ENCODE measurements at regions of chr20 and their contacts with region 1.

Region 1: GRCh38 chr20:31661625-31662371 is 24.1 kb downstream of the COX4I2 start:
- DNase-seq: peak; percentile 70 to 81 (median 73)
- H3K4me3 ChIP-seq: peak overlapping the region in 1 of 2 donors; percentile 70
- H3K4me3 Mint-ChIP-seq: peak overlapping the region; percentile 83 to 93 (median 84)
- H3K27ac ChIP-seq: peak overlapping the region; percentile 59
- H3K27ac Mint-ChIP-seq: peak overlapping the region; percentile 57 to 95 (median 89)
- H3K4me1 ChIP-seq: peaks cover 31% of the 10 kb centered on the region
- H3K4me1 Mint-ChIP-seq: peaks cover 21 to 43% (median 29%) of the 10 kb centered on the region in 4 donors
- H3K27me3 ChIP-seq: no peaks in the 10 kb centered on the region
- H3K27me3 Mint-ChIP-seq: no peaks in the 10 kb centered on the region

Region 2: GRCh38 chr20:31278178-31278577 is 383.6 kb before region 1 on chr20:
- CTCF ChIA-PET with region 1: no interaction called
- POLR2A ChIA-PET with region 1: no interaction called
- intact Hi-C with region 1: no loop called
- DNase-seq: no peak
- H3K4me3 ChIP-seq: no peak overlapping the region
- H3K4me3 Mint-ChIP-seq: peak overlapping the region in 1 of 8 donors; percentile 17
- H3K27ac ChIP-seq: no peak overlapping the region
- H3K27ac Mint-ChIP-seq: no peak overlapping the region
- H3K4me1 ChIP-seq: no peaks in the 10 kb centered on the region
- H3K4me1 Mint-ChIP-seq: no peaks in the 10 kb centered on the region
- H3K27me3 ChIP-seq: no peaks in the 10 kb centered on the region
- H3K27me3 Mint-ChIP-seq: no peaks in the 10 kb centered on the region

Region 3: DNA sequence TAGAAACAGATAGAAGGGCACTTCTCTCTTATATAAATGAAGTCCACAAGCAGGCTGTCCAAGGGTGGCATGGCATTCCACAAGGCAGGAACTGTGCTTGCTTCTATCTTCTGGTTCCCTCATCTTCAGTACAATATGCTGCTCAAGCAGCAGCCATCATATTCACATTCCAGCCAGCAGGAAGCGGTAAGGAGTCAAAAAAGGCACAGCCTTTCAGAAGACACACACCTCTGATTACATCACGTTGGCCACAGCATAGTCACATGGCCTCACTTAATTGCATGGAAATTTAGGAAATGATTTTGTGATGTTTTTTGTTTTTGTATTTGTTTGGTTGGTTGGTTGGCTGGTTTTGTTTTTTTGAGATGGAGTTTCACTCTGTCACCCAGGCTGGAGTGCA is 167.7 kb before region 1 on chr20:
- CTCF ChIA-PET with region 1: no interaction called
- POLR2A ChIA-PET with region 1: no interaction called
- intact Hi-C with region 1: no loop called
- DNase-seq: no peak
- H3K4me3 ChIP-seq: no peak overlapping the region
- H3K4me3 Mint-ChIP-seq: no peak overlapping the region
- H3K27ac ChIP-seq: no peak overlapping the region
- H3K27ac Mint-ChIP-seq: no peak overlapping the region
- H3K4me1 ChIP-seq: no peaks in the 10 kb centered on the region
- H3K4me1 Mint-ChIP-seq: no peaks in the 10 kb centered on the region
- H3K27me3 ChIP-seq: peaks cover 4% of the 10 kb centered on the region
- H3K27me3 Mint-ChIP-seq: peaks cover 10 to 13% of the 10 kb centered on the region in 2 donors

Region 4: DNA sequence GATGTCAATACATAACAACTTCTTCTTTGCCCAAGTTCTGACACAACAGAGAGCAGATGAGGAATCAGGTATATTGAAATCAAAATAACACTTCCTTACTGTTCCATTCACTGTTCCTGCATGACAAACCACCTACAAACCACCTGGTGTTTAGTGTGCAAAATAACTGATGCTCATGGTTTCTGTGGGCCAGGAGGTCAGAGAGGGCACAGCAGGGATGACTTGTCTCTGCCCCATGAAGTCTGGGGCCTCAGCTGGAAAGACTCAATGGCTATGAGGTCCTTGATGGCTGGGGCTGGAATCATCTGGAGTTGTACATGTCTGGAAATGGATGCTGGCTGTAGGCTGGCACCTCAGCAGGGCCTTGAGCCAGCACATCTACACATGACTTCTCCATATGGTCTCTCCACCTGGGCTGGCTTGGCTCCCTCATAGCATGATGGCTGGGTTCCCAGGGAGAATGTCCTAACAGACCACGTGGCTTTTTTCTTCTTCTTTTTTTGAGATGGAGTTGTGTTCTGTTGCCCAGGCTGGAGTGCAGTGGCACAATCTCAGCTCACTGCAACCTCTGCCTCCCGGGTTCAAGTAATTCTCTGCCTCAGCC is 31.5 kb before region 1 on chr20:
- CTCF ChIA-PET with region 1: interaction called, 27 read pairs
- POLR2A ChIA-PET with region 1: no interaction called
- intact Hi-C with region 1: no loop called
- DNase-seq: no peak
- H3K4me3 ChIP-seq: no peak overlapping the region
- H3K4me3 Mint-ChIP-seq: no peak overlapping the region
- H3K27ac ChIP-seq: no peak overlapping the region
- H3K27ac Mint-ChIP-seq: no peak overlapping the region
- H3K4me1 ChIP-seq: no peaks in the 10 kb centered on the region
- H3K4me1 Mint-ChIP-seq: no peaks in the 10 kb centered on the region
- H3K27me3 ChIP-seq: no peaks in the 10 kb centered on the region
- H3K27me3 Mint-ChIP-seq: no peaks in the 10 kb centered on the region

Region 5: GRCh38 chr20:31684153-31685015 is 22.6 kb after region 1 on chr20:
- CTCF ChIA-PET with region 1: interaction called, 24 read pairs
- POLR2A ChIA-PET with region 1: interaction called, 5 read pairs
- intact Hi-C with region 1: no loop called
- DNase-seq: peak; percentile 32 to 68 (median 45)
- H3K4me3 ChIP-seq: no peak overlapping the region
- H3K4me3 Mint-ChIP-seq: peak overlapping the region in 7 of 8 donors; percentile 43 to 71 (median 53)
- H3K27ac ChIP-seq: peak overlapping the region; percentile 8
- H3K27ac Mint-ChIP-seq: peak overlapping the region; percentile 76 to 97 (median 89)
- H3K4me1 ChIP-seq: peaks cover 91% of the 10 kb centered on the region
- H3K4me1 Mint-ChIP-seq: peaks cover 55 to 92% (median 68%) of the 10 kb centered on the region in 4 donors
- H3K27me3 ChIP-seq: no peaks in the 10 kb centered on the region
- H3K27me3 Mint-ChIP-seq: no peaks in the 10 kb centered on the region

Region 6: DNA sequence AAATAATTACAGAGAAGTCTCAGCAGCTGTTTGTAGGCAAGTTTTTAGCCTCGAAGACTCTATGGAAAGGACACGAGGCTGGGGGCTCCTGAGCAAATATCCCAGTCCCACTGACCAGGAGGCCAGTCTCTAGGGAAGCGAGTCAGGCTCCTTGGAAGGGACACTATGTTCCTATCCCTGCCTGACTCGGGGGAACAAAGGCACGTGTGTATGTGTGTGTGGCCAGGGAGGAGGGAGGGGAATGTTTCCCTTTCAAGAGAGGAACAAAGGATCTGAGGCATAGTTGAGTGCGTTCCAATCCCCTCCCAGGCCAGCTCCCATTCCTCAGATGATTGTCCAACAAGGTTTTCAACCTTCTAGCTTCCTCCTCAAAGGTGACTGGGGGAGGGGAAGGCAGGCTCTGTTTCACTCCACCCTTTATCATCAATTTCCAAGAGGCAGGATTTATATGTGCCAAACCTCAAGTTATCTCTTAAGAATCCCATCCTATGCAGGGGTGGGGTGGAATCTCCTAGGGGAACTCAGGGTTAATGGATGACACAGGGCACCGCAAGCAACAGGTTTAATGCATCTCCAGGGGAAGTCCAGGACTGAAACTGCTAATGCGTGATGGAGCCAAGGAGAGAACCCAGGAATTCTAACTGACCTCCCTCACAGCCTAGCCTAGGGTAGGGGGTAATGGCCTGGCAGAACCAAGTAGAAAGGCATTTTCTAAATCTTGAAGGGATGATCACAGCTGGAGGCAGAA is 50.9 kb after region 1 on chr20:
- CTCF ChIA-PET with region 1: interaction called, 581 read pairs
- POLR2A ChIA-PET with region 1: interaction called, 166 read pairs
- intact Hi-C with region 1: no loop called
- DNase-seq: no peak
- H3K4me3 ChIP-seq: no peak overlapping the region
- H3K4me3 Mint-ChIP-seq: peak overlapping the region in 4 of 8 donors; percentile 27 to 52 (median 49)
- H3K27ac ChIP-seq: no peak overlapping the region
- H3K27ac Mint-ChIP-seq: peak overlapping the region; percentile 63 to 91 (median 80)
- H3K4me1 ChIP-seq: peaks cover 93% of the 10 kb centered on the region
- H3K4me1 Mint-ChIP-seq: peaks cover 70 to 98% (median 87%) of the 10 kb centered on the region in 4 donors
- H3K27me3 ChIP-seq: no peaks in the 10 kb centered on the region
- H3K27me3 Mint-ChIP-seq: no peaks in the 10 kb centered on the region

Measured in CD4-positive, alpha-beta memory T cell (primary cell).